ENCODE measurements at regions of chr5 and their contacts with region 1.

Region 1: DNA sequence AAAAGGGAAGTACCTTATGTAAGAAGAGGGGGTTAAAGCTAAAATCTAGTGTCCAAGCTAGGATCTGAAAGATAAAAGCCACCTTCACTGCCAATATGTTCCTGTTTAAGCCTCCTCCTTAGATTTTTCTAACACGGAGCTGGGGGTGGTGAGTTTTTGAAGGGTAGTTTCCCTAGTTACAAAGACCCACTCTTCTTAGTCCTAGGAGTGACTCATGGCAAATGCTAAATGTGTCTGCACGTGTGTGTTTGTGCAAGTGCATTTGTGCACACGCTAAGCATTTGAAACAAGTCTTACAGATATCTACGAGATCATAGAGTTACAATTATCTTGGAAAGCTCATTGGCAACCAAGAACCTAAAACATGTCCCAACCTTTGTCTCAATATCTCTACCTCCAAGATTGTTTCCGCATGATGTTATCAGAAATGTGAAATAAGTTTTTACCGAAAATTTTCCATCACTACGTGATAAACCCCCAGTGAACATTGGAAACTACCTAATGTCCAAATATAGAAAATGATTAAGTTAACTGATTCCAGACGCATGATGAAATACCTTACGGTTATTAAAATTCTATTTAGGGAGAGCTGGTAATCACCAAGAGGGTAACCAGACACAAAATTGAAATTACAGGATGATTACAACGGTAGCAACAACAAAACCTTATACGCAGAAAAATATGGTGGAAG is 78.0 kb upstream of the HRH2 start:
- DNase-seq: no peak
- H3K4me3 ChIP-seq: no peak overlapping the region
- H3K27ac ChIP-seq: no peak overlapping the region
- H3K4me1 ChIP-seq: no peaks in the 10 kb centered on the region
- H3K27me3 ChIP-seq: peaks cover 32% of the 10 kb centered on the region
- CTCF ChIP-seq: no peak

Region 2: DNA sequence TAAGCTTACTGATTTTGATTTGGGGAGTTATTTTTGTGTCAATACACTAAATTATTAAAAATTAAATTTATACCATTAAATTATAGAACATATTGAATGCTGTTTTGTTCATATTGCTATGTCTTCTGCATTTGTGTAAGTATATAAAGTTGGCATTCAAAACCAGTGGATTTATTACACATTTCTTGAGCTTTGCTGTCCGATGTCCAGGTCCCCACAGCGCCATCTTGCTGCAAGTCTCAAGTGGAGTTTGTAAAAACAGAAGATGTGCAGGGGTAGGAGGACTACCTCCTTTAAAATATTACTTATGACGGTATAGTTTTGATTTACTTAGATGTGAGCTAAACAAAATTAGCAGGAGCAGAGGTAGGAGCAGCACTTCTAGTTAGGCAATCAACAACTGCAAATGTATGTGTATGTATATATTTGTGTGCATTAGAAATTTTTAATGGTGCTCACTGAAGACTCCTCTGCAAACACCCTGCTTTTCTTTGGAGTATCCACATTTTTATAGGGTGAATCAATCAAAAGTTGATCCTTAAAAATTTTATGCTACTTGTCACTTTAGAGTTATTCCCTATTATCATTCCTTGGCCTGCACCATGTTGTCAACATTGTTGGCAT is 1654.3 kb before region 1 on chr5:
- CTCF ChIA-PET with region 1: no interaction called
- POLR2A ChIA-PET with region 1: interaction called, 14 read pairs
- intact Hi-C with region 1: no loop called
- DNase-seq: peak; percentile 38
- H3K4me3 ChIP-seq: no peak overlapping the region
- H3K27ac ChIP-seq: no peak overlapping the region
- H3K4me1 ChIP-seq: no peaks in the 10 kb centered on the region
- H3K27me3 ChIP-seq: no peaks in the 10 kb centered on the region
- CTCF ChIP-seq: peak; percentile 68

Region 3: GRCh38 chr5:175344331-175345195 is 235.3 kb before region 1 on chr5:
- CTCF ChIA-PET with region 1: no interaction called
- POLR2A ChIA-PET with region 1: no interaction called
- intact Hi-C with region 1: no loop called
- DNase-seq: peak; percentile 64
- H3K4me3 ChIP-seq: no peak overlapping the region
- H3K27ac ChIP-seq: no peak overlapping the region
- H3K4me1 ChIP-seq: peaks cover 8% of the 10 kb centered on the region
- H3K27me3 ChIP-seq: no peaks in the 10 kb centered on the region
- CTCF ChIP-seq: no peak

Region 4: DNA sequence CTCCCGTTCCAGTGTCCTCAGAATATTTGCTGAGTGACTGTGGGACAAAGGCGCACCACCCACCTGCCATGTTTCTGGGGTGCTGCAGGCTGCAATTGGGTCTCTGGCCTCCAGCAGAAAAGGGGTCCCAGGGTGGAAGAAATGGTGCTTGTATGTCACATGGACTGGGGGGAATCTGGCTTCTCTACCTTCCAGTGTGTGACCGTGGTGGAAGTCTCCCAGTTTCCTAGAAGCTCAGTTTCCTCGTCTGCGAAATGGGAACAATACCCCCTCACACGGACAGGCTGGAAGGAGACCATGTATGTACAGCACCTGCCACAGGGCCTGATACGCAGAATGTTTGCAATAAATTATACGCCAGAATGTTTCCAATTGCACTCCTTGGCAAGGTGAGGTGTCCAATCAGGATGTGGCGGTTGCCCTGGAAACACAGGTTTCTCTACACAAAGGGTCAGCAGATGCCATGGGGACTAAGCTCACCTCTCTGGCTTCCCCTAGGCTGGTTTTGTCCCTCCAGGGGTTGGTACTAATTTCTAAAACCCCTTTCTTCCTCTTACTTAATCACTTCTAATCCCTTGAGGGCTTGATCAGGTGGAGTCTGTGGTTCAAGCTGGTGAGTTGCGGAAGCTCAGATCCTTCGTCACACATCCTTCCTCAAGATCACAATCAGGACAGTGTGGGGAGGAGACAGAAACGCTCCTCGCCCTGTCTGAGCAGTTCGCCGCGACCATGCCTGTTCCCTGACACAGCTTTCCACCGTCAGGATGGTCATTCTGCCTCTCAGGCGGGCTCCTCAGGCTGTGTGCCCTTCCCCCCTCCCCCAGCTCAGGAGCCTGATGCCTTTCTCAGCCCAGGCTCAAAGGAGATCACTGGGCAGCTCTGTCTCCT is 315.6 kb after region 1 on chr5:
- CTCF ChIA-PET with region 1: no interaction called
- POLR2A ChIA-PET with region 1: no interaction called
- intact Hi-C with region 1: no loop called
- DNase-seq: no peak
- H3K4me3 ChIP-seq: no peak overlapping the region
- H3K27ac ChIP-seq: no peak overlapping the region
- H3K4me1 ChIP-seq: no peaks in the 10 kb centered on the region
- H3K27me3 ChIP-seq: no peaks in the 10 kb centered on the region
- CTCF ChIP-seq: no peak

Measured in A673 (cell line).